Esophagus muscularis mucosa (tissue), 4 donors: ENCODE measurements at regions of chr10 and their contacts with region 1.

Region 1: DNA sequence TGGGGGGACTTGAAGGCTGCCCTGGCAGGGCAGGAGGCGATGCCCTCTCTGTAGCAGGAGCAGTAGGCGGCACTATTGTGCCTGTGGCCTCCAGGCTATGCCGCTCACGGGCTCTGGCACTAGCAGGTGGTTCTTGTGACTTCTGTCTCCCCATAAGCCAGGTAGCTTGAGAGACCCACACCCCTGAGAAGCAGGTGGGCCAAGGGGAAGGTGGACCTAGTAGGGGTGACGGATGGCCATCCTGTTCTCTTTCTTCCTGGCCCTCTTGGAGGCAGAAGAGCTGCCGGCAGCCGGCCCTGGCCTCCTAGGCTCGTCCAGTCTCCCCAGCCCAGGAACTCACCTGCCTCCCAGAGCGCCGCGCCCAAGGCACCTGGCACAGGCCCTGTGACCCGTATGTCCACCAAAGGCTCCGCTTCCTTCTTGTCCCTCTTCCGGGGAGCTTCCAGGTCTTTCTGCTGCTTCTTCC is 15.4 kb downstream of the MMRN2 start:
- DNase-seq: no peak
- H3K4me3 ChIP-seq: no peak overlapping the region
- H3K27ac ChIP-seq: no peak overlapping the region
- H3K4me1 ChIP-seq: peaks cover 22 to 63% (median 56%) of the 10 kb centered on the region in 4 donors
- H3K27me3 ChIP-seq: peaks cover 0 to 30% (median 0%) of the 10 kb centered on the region in 4 donors
- CTCF ChIP-seq: no peak
- EP300 ChIP-seq: no peak
- POLR2A ChIP-seq: no peak

Region 2: DNA sequence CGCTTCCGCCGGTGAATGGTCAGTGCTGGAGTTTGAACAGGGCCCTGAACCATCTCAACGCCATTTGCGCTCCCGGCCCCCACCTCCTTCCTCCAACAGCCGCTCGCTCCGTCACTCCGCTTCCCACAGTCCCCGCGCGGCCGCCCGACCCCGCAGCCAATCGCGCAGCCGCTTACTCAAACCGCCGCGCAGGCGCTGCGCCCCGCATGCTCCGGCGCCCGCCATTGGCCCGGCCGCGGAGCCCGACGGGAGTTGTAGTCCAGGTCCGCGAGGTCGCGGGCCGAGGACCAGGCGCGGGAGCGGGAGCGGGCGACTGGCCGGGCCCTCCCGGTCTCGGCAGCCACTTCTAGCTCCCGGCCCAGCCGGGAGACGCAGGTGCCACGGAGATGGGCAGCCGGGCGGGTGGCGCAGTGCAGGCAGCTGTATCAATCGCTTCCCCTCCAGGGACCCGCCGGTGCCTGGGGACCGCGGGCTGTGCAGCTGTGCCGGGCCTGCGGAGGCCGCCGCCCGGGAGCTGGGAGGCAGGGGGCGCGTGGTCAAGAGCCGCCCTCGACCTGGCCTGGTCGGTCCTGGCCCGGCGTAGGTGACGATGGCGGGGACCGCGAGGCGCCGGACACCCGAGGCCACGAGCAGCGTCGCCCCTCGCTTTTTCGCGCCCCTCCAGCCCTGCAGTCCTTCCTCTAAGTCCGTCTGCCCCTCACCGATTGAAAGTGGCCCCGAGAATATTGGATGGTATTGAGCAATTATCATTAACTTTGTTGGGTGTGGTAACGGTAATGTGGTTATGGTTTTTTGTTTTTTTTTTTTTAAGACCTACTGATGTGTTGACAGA is 420.1 kb before region 1 on chr10 and contains the start of gene WAPL:
- intact Hi-C with region 1: no loop called
- DNase-seq: peak; percentile 98
- H3K4me3 ChIP-seq: peak within 1 kb of the TSS; percentile 75 to 96 (median 80)
- H3K27ac ChIP-seq: peak within 1 kb of the TSS; percentile 93 to 99 (median 95)
- H3K4me1 ChIP-seq: peaks cover 43 to 71% (median 63%) of the 10 kb centered on the region in 4 donors
- H3K27me3 ChIP-seq: no peaks in the 10 kb centered on the region
- CTCF ChIP-seq: no peak
- EP300 ChIP-seq: no peak
- POLR2A ChIP-seq: peak; percentile 60
- total RNA-seq, gene WAPL: 34.2 to 40.5 (median 39.3) TPM

Region 3: DNA sequence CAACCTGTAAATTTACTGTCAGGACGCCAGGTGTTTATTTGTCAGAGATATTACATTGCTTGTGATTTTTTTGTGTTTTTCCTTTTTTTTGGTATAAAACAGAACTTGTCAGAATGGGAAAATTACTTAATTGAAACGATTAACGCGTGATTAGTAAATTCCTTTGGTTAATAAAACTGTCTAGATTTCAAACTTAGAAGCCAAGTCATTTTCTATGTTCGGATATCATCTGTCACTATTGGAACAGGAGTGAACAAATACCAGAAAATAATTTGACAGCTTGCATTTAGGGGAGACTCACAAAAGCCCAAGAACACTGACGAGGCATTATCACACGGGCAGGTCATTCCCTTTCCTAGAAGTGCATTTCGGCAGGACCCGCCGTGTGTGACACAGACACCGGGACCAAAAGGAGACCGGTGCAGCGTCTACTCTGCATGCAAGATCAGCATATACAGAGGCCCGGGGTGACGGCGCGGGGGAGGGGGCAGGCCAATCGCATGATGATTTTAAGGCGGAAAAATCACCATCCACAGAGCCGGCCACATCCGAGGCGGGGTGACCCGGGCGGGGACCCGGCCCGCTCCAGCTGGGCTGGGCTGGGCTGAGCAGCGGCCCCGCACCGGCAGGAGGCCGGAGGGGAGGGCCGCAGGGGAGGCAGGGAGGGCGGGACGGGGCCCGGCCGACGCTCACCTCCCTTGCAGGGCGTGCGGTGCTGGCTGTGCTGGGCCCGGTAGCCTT is 151.8 kb after region 1 on chr10:
- intact Hi-C with region 1: loop called (anchors 2 kb)
- DNase-seq: no peak
- H3K4me3 ChIP-seq: peak overlapping the region; percentile 75 to 97 (median 91)
- H3K27ac ChIP-seq: peak overlapping the region; percentile 98 to 99 (median 98)
- H3K4me1 ChIP-seq: peaks cover 43 to 58% (median 57%) of the 10 kb centered on the region in 4 donors
- H3K27me3 ChIP-seq: no peaks in the 10 kb centered on the region
- CTCF ChIP-seq: no peak
- EP300 ChIP-seq: no peak
- POLR2A ChIP-seq: no peak